Kidney (tissue), 22 donors: ENCODE measurements at regions of chr20 and their contacts with region 1.

Region 1: DNA sequence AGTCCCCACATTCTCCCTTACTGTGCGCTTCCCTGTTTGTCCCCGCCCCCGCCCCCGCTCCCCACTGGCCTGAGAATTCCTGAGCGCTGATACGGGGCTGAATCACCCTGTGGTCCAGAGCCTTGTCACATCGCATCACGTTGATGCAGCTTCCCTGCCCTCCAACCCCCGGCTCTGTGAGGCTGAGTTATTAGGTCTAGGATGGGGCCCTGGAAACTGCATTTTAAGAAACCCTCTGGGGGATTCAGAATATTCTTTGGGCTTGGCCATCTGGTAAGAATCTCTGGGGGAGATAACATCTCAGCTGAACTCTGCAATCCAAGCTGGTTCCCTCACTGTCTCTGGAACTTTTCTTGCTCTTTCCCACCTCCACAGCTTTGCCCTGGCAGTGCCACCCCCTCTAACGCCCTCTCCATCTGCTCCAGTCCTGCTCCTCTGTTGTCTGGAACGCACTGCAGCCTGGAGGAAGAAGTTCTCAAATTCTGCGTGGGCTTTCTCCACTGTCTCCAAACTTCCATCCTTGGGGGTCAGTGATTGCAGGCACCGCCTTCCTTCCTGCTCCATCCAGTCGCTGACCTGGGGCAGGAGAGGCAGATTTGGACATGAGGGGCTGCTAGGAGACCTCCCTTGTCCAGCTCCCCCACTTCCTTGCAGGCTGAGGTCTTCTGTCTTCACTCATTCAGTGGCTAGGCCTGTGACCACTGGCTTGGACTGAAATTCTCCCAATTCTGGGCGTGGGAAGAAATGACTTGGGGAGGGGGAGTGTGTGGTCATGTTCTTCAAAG is 42.6 kb downstream of the KIAA1755 start:
- DNase-seq: peak in 2 of 5 donors; percentile 23 to 43
- H3K4me3 ChIP-seq: no peak overlapping the region
- H3K27ac ChIP-seq: no peak overlapping the region
- H3K4me1 ChIP-seq: no peaks in the 10 kb centered on the region
- H3K27me3 ChIP-seq: no peaks in the 10 kb centered on the region
- CTCF ChIP-seq: no peak

Region 2: GRCh38 chr20:38060536-38060935 is 157.4 kb before region 1 on chr20:
- intact Hi-C with region 1: loop called (anchors 5 kb)
- DNase-seq: no peak
- H3K4me3 ChIP-seq: no peak overlapping the region
- H3K27ac ChIP-seq: no peak overlapping the region
- H3K4me1 ChIP-seq: no peaks in the 10 kb centered on the region
- H3K27me3 ChIP-seq: no peaks in the 10 kb centered on the region
- CTCF ChIP-seq: no peak

Region 3: GRCh38 chr20:38173237-38174156 is 44.5 kb before region 1 on chr20:
- intact Hi-C with region 1: no loop called
- DNase-seq: no peak
- H3K4me3 ChIP-seq: no peak overlapping the region
- H3K27ac ChIP-seq: no peak overlapping the region
- H3K4me1 ChIP-seq: peaks cover 0 to 5% (median 0%) of the 10 kb centered on the region in 3 donors
- H3K27me3 ChIP-seq: no peaks in the 10 kb centered on the region
- CTCF ChIP-seq: no peak

Region 4: GRCh38 chr20:38441916-38442315 is 223.9 kb after region 1 on chr20:
- intact Hi-C with region 1: no loop called
- DNase-seq: no peak
- H3K4me3 ChIP-seq: no peak overlapping the region
- H3K27ac ChIP-seq: no peak overlapping the region
- H3K4me1 ChIP-seq: peaks cover 0 to 2% (median 0%) of the 10 kb centered on the region in 3 donors
- H3K27me3 ChIP-seq: no peaks in the 10 kb centered on the region
- CTCF ChIP-seq: no peak